Activated CD4-positive, alpha-beta T cell treated with anti-CD3 and anti-CD28 coated beads, Interleukin-2, amount 10 ng/mL, durations not matched to agents 24 days and 14 days (primary cell): ENCODE measurements at regions of chr3 and their contacts with region 1.

Region 1: DNA sequence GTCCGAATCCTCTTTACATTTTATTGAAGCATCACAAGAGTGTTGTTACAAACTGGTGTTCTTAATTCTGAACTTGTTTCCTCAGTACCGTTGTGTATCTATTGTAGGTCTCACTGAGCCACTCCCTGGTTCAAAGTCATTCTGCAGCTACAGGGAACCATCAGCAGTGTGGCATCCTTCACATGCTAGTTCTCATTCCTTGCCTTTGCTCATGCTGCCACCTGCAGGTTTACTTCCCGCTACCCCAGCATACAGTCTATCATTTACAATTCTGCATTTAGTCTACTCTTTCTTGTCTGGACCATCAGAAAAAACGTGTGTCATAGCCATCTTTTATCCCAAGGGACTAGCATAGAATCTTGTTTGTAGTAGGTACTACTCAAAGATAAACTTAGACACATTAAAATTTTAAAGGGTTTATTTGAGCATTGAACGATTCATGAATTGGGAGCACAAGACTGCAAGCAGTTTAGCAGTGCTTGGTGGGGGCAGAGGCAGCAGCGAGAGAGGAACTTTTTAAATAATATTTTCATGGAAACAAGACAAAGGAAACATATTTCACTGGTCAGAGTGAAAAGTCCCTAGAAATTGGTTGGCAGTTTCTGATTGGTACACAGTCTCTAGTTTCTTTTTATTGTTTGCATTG is 402.1 kb downstream of the CADM2 start:
- DNase-seq: no peak
- H3K4me3 Mint-ChIP-seq: no peak overlapping the region
- H3K27ac Mint-ChIP-seq: no peak overlapping the region
- H3K4me1 Mint-ChIP-seq: no peaks in the 10 kb centered on the region
- H3K27me3 Mint-ChIP-seq: no peaks in the 10 kb centered on the region

Region 2: DNA sequence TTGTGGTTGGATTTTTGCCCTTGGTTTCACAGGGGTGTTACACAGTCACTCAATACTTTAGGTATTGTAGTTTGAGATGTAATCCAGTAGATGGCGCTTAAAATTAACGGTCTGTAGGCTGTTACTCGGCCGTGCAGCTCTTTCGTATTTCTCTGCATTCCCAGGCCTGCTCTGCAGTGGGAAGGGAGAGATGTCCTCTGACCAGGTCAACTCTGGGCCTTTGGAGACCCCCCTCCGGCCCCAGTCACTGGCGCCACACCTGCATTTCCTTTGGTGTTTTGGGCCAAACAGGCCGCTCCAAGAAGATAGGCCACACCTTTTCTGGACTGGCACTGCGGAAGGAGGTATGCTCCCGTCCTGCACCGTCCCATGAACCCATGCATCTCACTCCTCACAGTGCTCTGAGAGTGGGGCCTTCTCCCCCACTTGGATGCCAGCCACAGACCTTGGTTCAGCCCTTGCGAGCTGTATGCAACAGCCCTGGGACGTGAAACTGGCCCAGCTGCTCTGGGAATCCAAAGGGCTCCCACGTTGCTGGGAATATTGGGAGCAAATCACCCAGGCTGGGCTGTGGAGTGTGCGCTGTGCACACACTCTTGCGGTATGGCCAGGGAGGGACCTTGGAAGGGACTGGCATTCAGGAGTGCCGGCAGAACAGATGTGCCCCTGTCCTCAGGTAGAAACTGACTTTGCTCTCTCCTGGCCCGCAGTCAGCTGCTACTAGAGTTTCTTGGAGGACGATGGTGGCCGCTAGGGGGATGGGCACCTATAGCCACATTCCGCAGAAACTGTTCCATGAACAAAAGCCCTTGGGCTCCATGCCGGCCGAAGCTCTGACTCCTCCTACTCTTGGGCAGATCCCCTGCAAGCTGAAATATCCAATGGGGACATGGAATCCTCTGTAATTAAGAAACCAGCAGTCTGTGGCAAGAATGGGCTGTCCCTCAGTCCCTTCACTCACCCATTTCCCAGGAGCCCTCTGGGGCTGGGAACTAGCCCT is 812.6 kb before region 1 on chr3:
- intact Hi-C with region 1: loop called (anchors 5 kb)
- DNase-seq: no peak
- H3K4me3 Mint-ChIP-seq: no peak overlapping the region
- H3K27ac Mint-ChIP-seq: no peak overlapping the region
- H3K4me1 Mint-ChIP-seq: no peaks in the 10 kb centered on the region
- H3K27me3 Mint-ChIP-seq: no peaks in the 10 kb centered on the region

Region 3: DNA sequence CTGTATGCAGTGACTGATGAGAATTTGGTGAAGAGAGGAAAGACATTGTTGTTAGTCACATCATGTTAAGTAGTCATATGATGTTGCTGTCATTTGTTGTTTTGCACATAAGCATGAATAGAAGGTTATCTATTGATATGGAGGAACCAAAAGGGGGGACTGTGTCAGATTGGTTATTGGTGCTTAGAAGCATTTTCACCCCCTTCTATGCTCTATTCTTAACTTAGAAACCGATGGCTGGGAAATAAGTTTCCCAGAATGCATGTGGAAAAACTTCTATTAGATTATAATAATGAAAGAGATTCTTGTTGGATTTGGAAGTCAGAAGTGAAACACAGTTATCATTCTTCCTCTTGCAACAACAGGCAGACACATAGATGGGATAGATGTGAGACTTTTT is 435.3 kb before region 1 on chr3:
- intact Hi-C with region 1: no loop called
- DNase-seq: no peak
- H3K4me3 Mint-ChIP-seq: no peak overlapping the region
- H3K27ac Mint-ChIP-seq: no peak overlapping the region
- H3K4me1 Mint-ChIP-seq: no peaks in the 10 kb centered on the region
- H3K27me3 Mint-ChIP-seq: no peaks in the 10 kb centered on the region